ENCODE measurements at regions of chr19 and their contacts with region 1.

Region 1: GRCh38 chr19:8526345-8527067 is 12.5 kb upstream of the ZNF414 start:
- DNase-seq: peak; percentile 92
- H3K4me3 ChIP-seq: peak overlapping the region; percentile 46 to 85 (median 69)
- H3K27ac ChIP-seq: peak overlapping the region; percentile 75
- H3K4me1 ChIP-seq: peaks cover 7% of the 10 kb centered on the region
- H3K27me3 ChIP-seq: no peaks in the 10 kb centered on the region
- CTCF ChIP-seq: no peak
- POLR2A ChIP-seq: no peak

Region 2: DNA sequence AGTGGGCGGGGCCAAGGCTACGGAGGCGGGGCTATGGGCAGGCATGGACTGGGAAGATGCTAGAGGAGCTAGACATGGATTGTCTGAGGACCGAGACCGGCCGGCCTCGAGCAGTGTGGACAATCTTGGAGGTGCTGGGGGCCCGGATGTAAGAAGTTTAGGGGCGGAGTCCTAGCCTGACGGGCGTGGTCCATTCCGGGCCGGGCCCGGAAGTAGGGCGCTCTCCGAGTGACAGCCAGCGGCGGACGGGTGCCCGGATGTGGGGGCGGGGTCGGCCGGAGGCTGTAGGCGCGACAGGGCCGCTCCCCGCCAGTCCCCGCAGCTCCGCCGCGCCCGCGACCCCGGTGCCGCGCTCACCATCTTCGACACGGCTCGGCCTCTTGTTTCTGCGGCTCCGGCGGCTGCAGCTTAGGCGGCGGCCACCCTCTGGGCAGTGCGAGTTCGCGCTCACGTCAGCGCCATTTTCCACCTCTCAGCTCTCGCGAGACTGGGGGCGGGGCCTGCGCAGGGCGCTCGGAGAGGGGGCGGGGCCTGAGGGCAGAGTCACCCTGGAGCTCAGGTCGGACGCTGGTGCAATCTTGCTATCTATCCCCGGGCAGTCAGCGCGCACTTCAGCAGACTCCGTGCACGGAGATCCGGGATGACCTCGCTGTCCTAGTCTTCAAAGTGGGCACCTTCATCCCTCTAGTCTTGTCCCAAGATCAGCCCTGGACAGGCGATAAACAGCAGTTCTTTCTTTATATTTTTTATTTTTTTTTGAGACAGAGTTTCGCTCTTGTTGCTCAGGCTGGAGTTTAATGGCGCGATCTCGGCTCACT is 12.6 kb before region 1 on chr19 and contains the start of gene ZNF414:
- CTCF ChIA-PET with region 1: interaction called, 21 read pairs
- POLR2A ChIA-PET with region 1: interaction called, 16 read pairs
- dilution Hi-C with region 1: no loop called
- intact Hi-C with region 1: loop called (anchors 1 kb)
- DNase-seq: peak; percentile 93
- H3K4me3 ChIP-seq: peak within 1 kb of the TSS; percentile 47 to 95 (median 62)
- H3K27ac ChIP-seq: peak within 1 kb of the TSS; percentile 96
- H3K4me1 ChIP-seq: peaks cover 11% of the 10 kb centered on the region
- H3K27me3 ChIP-seq: peaks cover 1 to 4% of the 10 kb centered on the region in 2 experiments
- CTCF ChIP-seq: no peak
- POLR2A ChIP-seq: peak; percentile 93
- total RNA-seq, gene ZNF414: 14.5 and 20.6 TPM in 2 replicates

Region 3: GRCh38 chr19:8592231-8593009 is 65.9 kb after region 1 on chr19:
- CTCF ChIA-PET with region 1: interaction called, 3 read pairs
- POLR2A ChIA-PET with region 1: interaction called, 3 read pairs
- dilution Hi-C with region 1: loop called (anchors 10 kb)
- intact Hi-C with region 1: no loop called
- DNase-seq: peak; percentile 86
- H3K4me3 ChIP-seq: no peak overlapping the region
- H3K27ac ChIP-seq: no peak overlapping the region
- H3K4me1 ChIP-seq: no peaks in the 10 kb centered on the region
- H3K27me3 ChIP-seq: peaks cover 0 to 3% of the 10 kb centered on the region in 2 experiments
- CTCF ChIP-seq: no peak
- POLR2A ChIP-seq: peak; percentile 38

Region 4: DNA sequence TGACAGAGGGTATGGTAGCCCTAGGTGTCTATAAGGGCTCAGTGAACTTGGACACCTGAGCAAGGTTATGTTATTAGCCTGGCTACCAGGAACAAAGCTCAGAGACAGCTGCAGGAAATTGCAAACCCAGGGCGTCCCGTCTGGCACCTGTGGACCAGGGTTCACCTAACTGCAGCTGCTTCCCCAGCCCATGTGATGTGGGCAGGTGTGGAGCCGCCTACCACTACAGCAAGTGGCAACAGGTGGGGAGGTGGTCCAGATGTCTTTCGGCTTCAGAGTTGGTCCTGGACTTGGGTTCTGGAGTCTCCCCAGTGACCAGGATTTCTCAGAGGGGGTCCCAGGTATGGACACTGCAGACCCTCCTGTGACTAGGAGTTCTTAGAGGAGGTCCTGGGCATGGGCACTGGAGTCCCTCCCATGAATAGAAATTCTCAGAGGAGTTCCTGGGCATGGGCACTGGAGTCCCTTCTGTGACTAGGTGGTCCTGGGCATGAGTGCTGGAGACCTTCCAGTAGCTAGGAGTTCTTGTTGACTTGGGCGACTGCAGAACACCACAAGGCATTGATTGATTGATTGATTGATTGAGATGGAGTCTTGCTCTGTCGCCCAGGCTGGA is 146.9 kb after region 1 on chr19:
- CTCF ChIA-PET with region 1: no interaction called
- POLR2A ChIA-PET with region 1: no interaction called
- dilution Hi-C with region 1: no loop called
- intact Hi-C with region 1: no loop called
- DNase-seq: no peak
- H3K4me3 ChIP-seq: no peak overlapping the region
- H3K27ac ChIP-seq: no peak overlapping the region
- H3K4me1 ChIP-seq: no peaks in the 10 kb centered on the region
- H3K27me3 ChIP-seq: no peaks in the 10 kb centered on the region
- CTCF ChIP-seq: no peak
- POLR2A ChIP-seq: no peak

Region 5: DNA sequence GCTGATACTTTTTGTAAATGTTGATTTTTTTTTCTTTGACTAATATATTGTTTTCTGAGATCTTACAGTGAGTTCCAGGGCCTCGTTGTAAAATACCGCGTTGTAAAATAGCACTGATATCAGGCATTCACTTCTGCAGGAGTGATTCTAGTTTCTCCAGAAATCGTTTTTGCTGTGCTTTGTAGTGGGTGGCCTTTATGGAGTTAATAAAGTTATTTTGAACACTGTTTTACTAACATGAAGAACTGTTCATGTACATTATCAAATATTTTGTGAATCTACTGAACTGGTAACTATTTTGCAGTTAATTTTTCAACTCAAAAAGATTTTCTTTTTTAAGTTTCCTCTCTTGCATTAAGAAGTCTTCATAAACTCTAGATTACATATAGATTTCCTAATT is 909.9 kb after region 1 on chr19:
- CTCF ChIA-PET with region 1: no interaction called
- POLR2A ChIA-PET with region 1: no interaction called
- dilution Hi-C with region 1: no loop called
- intact Hi-C with region 1: no loop called
- DNase-seq: no peak
- H3K4me3 ChIP-seq: peak overlapping the region in 1 of 3 experiments; percentile 82
- H3K27ac ChIP-seq: no peak overlapping the region
- H3K4me1 ChIP-seq: peaks cover 13% of the 10 kb centered on the region
- H3K27me3 ChIP-seq: no peaks in the 10 kb centered on the region
- CTCF ChIP-seq: no peak
- POLR2A ChIP-seq: no peak

Measured in endothelial cell of umbilical vein (primary cell).